PC-3 (cell line): ENCODE measurements at regions of chrX and their contacts with region 1.

Region 1: DNA sequence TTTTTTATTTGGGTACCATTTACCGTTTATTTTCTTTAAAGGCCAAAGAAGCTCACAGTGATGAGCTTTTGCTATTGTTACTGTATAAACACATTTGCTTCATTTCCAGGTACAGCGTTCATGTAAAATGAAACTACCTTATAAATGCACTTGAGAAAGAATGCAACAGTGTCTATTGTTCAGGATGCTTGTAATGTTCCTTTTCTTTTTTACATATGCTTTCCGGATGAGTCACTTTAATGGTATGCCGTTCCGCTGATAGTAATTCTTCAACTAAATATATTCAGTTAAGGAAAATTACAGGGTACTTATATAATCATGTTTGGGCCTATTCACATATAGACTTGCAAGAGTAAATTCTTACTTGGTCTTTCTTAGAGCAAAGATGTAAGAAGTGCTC is 354.9 kb downstream of the RPA4 start:
- DNase-seq: peak; percentile 83
- ATAC-seq: peak; percentile 90
- H3K4me3 ChIP-seq: peak overlapping the region; percentile 26; the same call in 1 of the 2 replicates
- H3K27ac ChIP-seq: no peak overlapping the region
- H3K4me1 ChIP-seq: peaks cover 14% of the 10 kb centered on the region
- H3K27me3 ChIP-seq: no peaks in the 10 kb centered on the region
- CTCF ChIP-seq: no peak

Region 2: GRCh38 chrX:96564595-96564994 is 674.0 kb before region 1 on chrX:
- CTCF ChIA-PET with region 1: no interaction called
- POLR2A ChIA-PET with region 1: no interaction called
- intact Hi-C with region 1: no loop called
- DNase-seq: no peak
- ATAC-seq: no peak
- H3K4me3 ChIP-seq: no peak overlapping the region
- H3K27ac ChIP-seq: no peak overlapping the region
- H3K4me1 ChIP-seq: peaks cover 12% of the 10 kb centered on the region; the same call in 1 of the 2 replicates
- H3K27me3 ChIP-seq: no peaks in the 10 kb centered on the region
- CTCF ChIP-seq: no peak

Region 3: GRCh38 chrX:97260679-97261078 is 22.0 kb after region 1 on chrX:
- CTCF ChIA-PET with region 1: no interaction called
- POLR2A ChIA-PET with region 1: no interaction called
- intact Hi-C with region 1: loop called (anchors 2 kb)
- DNase-seq: peak; percentile 41
- ATAC-seq: peak; percentile 88
- H3K4me3 ChIP-seq: peak overlapping the region; percentile 9; the same call in 1 of the 2 replicates
- H3K27ac ChIP-seq: peak overlapping the region; percentile 49
- H3K4me1 ChIP-seq: peaks cover 16% of the 10 kb centered on the region
- H3K27me3 ChIP-seq: no peaks in the 10 kb centered on the region
- CTCF ChIP-seq: no peak